Activated CD4-positive, alpha-beta T cell treated with anti-CD3 and anti-CD28 coated beads for 36 hours (primary cell): ENCODE measurements at regions of chr3 and their contacts with region 1.

Region 1: DNA sequence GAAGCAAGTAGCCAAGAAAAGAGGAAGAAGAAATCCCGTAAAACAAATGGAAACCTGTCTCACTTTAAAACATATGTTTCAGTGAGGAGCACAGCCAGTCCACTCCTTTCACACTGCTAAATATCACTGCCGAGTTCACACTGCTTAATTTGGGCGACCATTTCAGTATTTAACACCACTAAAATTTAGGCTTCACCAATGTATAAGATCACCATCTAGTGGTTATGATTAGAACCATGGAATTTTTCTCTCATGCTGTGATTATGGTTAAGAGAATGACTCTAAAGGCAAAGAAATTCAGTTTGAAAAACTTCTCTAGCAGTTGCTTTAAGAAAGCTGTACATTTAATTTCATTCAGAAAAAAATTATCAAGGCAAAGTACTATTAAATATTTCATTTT is 16.6 kb downstream of the SLC4A7 start:
- DNase-seq: no peak
- ATAC-seq: peak; percentile 84
- H3K4me3 Mint-ChIP-seq: no peak overlapping the region
- H3K27ac Mint-ChIP-seq: no peak overlapping the region
- H3K4me1 Mint-ChIP-seq: peaks cover 18% of the 10 kb centered on the region
- H3K27me3 Mint-ChIP-seq: no peaks in the 10 kb centered on the region

Region 2: GRCh38 chr3:27134165-27134796 is 333.3 kb before region 1 on chr3:
- CTCF ChIA-PET with region 1: interaction called, 4 read pairs
- POLR2A ChIA-PET with region 1: no interaction called
- intact Hi-C with region 1: loop called (anchors 1 to 10 kb)
- DNase-seq: peak; percentile 75
- ATAC-seq: peak; percentile 60
- H3K4me3 Mint-ChIP-seq: no peak overlapping the region
- H3K27ac Mint-ChIP-seq: no peak overlapping the region
- H3K4me1 Mint-ChIP-seq: no peaks in the 10 kb centered on the region
- H3K27me3 Mint-ChIP-seq: peaks cover 2% of the 10 kb centered on the region

Region 3: GRCh38 chr3:27335571-27335970 is 132.0 kb before region 1 on chr3:
- CTCF ChIA-PET with region 1: no interaction called
- POLR2A ChIA-PET with region 1: no interaction called
- intact Hi-C with region 1: no loop called
- DNase-seq: no peak
- ATAC-seq: no peak
- H3K4me3 Mint-ChIP-seq: no peak overlapping the region
- H3K27ac Mint-ChIP-seq: no peak overlapping the region
- H3K4me1 Mint-ChIP-seq: no peaks in the 10 kb centered on the region
- H3K27me3 Mint-ChIP-seq: no peaks in the 10 kb centered on the region

Region 4: DNA sequence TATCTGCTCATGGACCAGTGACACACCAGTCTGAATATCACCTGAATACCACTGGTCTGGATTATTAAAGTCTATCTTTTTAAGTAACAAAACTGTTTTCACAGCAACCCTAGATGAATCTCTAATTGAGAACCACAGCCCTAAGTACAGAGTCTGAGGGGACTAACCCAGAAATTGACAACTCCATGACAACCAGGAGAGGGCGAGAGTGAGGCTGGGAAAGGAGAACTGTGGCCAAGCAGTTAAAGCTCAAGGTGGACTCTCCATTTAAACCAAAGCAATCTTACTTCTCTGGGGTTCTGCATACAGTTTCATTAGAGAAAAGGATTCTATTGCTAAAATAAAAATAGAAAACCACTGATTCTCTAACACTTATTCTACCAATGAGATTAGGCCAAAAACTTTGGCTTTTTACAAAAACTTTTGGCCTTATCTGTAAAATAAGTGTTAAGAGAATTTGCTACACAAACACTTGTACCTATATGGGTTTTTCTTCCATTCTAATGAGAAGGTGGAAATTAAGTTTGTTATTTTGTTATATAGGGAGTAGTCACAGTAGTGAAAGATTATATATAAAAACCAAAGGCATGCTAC is 109.8 kb before region 1 on chr3:
- CTCF ChIA-PET with region 1: interaction called, 5 read pairs
- POLR2A ChIA-PET with region 1: no interaction called
- intact Hi-C with region 1: loop called (anchors 1 kb)
- DNase-seq: peak; percentile 77
- ATAC-seq: peak; percentile 94
- H3K4me3 Mint-ChIP-seq: no peak overlapping the region
- H3K27ac Mint-ChIP-seq: no peak overlapping the region
- H3K4me1 Mint-ChIP-seq: peaks cover 26% of the 10 kb centered on the region
- H3K27me3 Mint-ChIP-seq: no peaks in the 10 kb centered on the region

Region 5: DNA sequence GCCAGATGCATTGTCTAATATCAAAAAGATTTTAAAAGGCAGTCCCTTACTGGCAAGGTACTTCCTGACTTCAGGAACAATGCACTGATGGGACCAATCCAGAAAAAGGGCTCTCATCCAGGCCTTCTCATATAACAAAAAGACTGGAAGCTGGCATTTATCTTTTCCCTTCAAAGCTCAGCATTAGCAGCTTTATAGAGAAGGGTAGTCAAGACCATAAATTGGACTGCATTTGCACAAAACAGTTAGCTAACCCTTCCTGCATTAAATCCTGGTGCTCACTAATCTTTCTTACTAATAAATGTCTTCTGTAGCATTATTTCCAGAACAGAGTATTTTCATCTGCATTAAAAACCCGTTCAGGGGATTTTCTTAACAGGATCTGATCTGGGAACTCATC is 52.3 kb before region 1 on chr3:
- CTCF ChIA-PET with region 1: interaction called, 10 read pairs
- POLR2A ChIA-PET with region 1: no interaction called
- intact Hi-C with region 1: no loop called
- DNase-seq: no peak
- ATAC-seq: no peak
- H3K4me3 Mint-ChIP-seq: no peak overlapping the region
- H3K27ac Mint-ChIP-seq: no peak overlapping the region
- H3K4me1 Mint-ChIP-seq: no peaks in the 10 kb centered on the region
- H3K27me3 Mint-ChIP-seq: no peaks in the 10 kb centered on the region

Region 6: GRCh38 chr3:27449530-27450150 is 17.9 kb before region 1 on chr3:
- CTCF ChIA-PET with region 1: interaction called, 10 read pairs
- POLR2A ChIA-PET with region 1: no interaction called
- intact Hi-C with region 1: no loop called
- DNase-seq: no peak
- ATAC-seq: no peak
- H3K4me3 Mint-ChIP-seq: no peak overlapping the region
- H3K27ac Mint-ChIP-seq: no peak overlapping the region
- H3K4me1 Mint-ChIP-seq: peaks cover 28% of the 10 kb centered on the region
- H3K27me3 Mint-ChIP-seq: no peaks in the 10 kb centered on the region